GM12878 (cell line): ENCODE measurements at regions of chr1 and their contacts with region 1.

Region 1: DNA sequence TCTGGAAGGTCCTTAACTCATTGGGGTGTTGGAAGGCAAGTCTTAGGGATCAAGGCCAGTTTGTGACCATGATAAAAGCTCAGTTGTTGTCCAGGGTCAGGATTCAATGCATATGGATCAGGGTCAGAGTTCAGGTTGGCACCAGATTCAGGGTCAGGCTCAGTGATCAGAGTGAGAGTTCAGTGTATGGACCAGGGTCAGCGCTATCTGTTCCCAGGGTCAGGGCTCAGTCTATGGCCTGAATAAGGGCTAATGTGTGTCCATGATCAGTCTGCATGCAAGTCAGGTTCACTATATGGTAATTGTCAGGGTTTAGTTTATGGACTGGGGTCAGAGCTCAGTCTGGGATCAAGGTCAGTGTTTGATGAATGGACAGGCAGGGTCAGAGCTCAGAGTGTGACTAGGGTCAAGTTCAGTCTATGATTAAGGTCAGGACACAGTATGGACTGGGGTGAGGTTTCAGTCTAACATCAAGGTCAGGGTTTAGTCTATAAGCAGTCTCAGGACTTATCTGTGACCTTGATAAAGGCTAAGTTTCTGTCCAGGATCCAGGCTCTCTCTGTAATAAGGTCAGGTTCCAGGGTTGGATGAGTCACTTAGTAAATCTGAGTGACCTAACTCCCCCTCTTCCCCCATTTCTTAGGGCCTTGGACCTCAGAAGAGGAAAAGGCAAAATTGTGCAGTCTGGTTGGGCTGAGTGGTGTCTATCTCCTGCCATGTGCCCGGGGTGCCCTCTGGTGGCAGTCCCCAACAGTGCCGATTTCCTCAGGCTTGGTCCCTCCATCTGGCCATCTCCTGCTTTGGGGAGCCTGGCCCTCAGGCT is 23.8 kb downstream of the KNCN start:
- DNase-seq: no peak
- ATAC-seq: peak; percentile 89
- H3K4me3 ChIP-seq: no peak overlapping the region
- H3K27ac ChIP-seq: no peak overlapping the region
- H3K4me1 ChIP-seq: peaks cover 3% of the 10 kb centered on the region
- H3K27me3 ChIP-seq: peaks cover 2 to 3% of the 10 kb centered on the region in 2 experiments; a peak in 2 of 4 replicates
- CTCF ChIP-seq: peak; percentile 96 to 98 (median 97)
- EP300 ChIP-seq: no peak
- POLR2A ChIP-seq: no peak
- RAD21 ChIP-seq: peak; percentile 93

Region 2: DNA sequence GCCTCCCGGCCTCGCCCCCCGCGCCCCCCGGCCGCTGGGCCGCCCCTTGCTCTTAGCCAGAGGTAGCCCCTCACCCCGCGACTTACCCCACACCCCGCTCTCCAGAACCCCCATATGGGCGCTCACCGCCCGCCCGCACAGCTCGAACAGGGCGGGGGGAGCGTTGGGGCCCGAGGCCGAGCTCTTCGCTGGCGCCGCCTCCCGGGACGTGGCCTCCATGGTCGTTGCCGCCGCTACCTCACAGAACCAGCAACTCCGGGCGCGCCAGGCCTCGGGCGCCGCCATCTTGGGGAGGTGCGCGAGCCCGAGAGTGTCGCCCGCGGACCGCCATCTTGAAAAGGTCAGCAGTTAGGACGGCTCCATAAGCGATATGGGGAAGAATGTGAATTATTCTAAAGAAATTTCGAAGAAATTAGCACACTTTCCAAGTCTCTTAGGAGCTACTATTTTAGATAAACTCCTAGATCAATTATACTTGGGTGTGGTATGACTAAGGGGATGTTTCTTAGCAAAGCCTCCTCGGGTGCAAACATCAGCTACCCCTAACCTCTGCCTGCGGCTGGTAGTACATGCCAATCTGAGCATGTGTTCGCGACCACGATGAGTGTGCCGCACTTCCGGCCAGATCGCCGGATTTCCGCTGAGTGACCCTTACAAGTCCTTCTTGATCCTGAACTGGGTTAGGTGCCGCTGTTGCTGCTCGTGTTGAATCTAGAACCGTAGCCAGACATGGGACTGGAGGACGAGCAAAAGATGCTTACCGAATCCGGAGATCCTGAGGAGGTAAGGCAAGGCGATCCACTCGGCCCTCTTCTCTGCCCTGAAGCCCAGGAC is 224.4 kb before region 1 on chr1 and contains the starts of genes LRRC41 and UQCRH:
- CTCF ChIA-PET with region 1: no interaction called
- POLR2A ChIA-PET with region 1: no interaction called
- RAD21 ChIA-PET with region 1: no interaction called
- SMC1A ChIA-PET with region 1: no interaction called
- in situ Hi-C with region 1: no loop called
- intact Hi-C with region 1: no loop called
- DNase-seq: peak; percentile 93
- ATAC-seq: peak; percentile 83
- H3K4me3 ChIP-seq: peak within 1 kb of the TSS; percentile 98
- H3K27ac ChIP-seq: peak within 1 kb of the TSS; percentile 91
- H3K4me1 ChIP-seq: peaks cover 15% of the 10 kb centered on the region
- H3K27me3 ChIP-seq: no peaks in the 10 kb centered on the region
- CTCF ChIP-seq: 0 out of 6 replicates have a peak, but pooled peaks of 1 of the 3 experiments have one; percentile 1
- EP300 ChIP-seq: no peak
- POLR2A ChIP-seq: peak; percentile 93
- RAD21 ChIP-seq: no peak
- polyA plus RNA-seq, gene LRRC41: 12.0 to 12.6 TPM
- polyA plus RNA-seq, gene UQCRH: 1,451 to 1,539 TPM

Region 3: DNA sequence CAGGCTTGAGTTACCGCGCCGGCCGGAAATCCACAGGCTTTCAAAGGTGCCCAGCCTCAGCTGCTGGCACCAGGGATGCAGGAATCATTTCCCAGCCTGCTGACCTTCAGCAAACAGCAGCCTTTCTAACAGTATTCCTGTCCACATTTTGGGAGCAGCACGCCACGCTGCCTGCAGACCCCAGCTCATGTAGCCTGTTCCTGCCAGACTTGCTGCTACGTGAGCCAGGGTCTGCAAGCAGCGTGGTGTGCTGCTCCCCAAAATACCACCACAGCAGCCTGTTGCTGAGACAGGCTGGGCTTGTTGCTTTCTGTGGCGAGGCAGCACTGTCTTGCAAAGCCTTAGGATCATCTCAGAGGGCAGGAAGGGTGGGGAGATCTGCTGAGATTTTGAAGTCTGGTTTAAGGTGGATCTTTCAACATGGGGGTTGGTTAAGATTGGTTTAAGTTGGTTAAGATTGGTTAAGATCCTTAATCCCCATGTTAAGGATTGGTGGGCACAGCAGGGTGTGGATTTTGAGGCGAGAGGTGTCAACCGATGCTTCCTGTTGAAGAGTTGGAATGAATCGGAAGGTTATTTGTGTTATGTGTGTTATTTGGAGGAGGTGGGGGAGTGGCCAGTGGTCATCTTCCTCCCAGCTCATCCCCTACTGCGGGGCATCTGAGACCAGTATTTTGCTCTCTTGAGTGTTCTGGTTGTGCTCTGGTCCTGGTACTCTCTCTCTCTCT is 120.6 kb before region 1 on chr1:
- CTCF ChIA-PET with region 1: interaction called, 3 read pairs
- POLR2A ChIA-PET with region 1: no interaction called
- RAD21 ChIA-PET with region 1: no interaction called
- SMC1A ChIA-PET with region 1: no interaction called
- in situ Hi-C with region 1: no loop called
- intact Hi-C with region 1: loop called (anchors 1 kb)
- DNase-seq: no peak
- ATAC-seq: no peak
- H3K4me3 ChIP-seq: no peak overlapping the region
- H3K27ac ChIP-seq: no peak overlapping the region
- H3K4me1 ChIP-seq: no peaks in the 10 kb centered on the region
- H3K27me3 ChIP-seq: no peaks in the 10 kb centered on the region
- CTCF ChIP-seq: no peak
- EP300 ChIP-seq: no peak
- POLR2A ChIP-seq: no peak
- RAD21 ChIP-seq: no peak

Region 4: GRCh38 chr1:46442317-46443161 is 85.1 kb before region 1 on chr1:
- CTCF ChIA-PET with region 1: interaction called, 84 read pairs
- POLR2A ChIA-PET with region 1: interaction called, 4 read pairs
- RAD21 ChIA-PET with region 1: interaction called, 19 read pairs
- SMC1A ChIA-PET with region 1: interaction called, 18 read pairs
- in situ Hi-C with region 1: loop called (anchors 5 kb)
- intact Hi-C with region 1: loop called (anchors 1 kb)
- DNase-seq: no peak
- ATAC-seq: peak; percentile 89
- H3K4me3 ChIP-seq: no peak overlapping the region; the same call in 1 of the 2 replicates
- H3K27ac ChIP-seq: no peak overlapping the region
- H3K4me1 ChIP-seq: peaks cover 4% of the 10 kb centered on the region; the same call in 1 of the 2 replicates
- H3K27me3 ChIP-seq: peaks cover 4 to 11% of the 10 kb centered on the region in 2 experiments
- CTCF ChIP-seq: peak; percentile 75 to 89 (median 88)
- EP300 ChIP-seq: no peak
- POLR2A ChIP-seq: no peak
- RAD21 ChIP-seq: 0 out of 2 replicates have a peak, but pooled peaks have one; percentile 15

Region 5: GRCh38 chr1:46466477-46467182 is 61.1 kb before region 1 on chr1:
- CTCF ChIA-PET with region 1: no interaction called
- POLR2A ChIA-PET with region 1: no interaction called
- RAD21 ChIA-PET with region 1: no interaction called
- SMC1A ChIA-PET with region 1: no interaction called
- in situ Hi-C with region 1: no loop called
- intact Hi-C with region 1: no loop called
- DNase-seq: no peak
- ATAC-seq: peak; percentile 62
- H3K4me3 ChIP-seq: peak overlapping the region; percentile 53; the same call in 1 of the 2 replicates
- H3K27ac ChIP-seq: no peak overlapping the region
- H3K4me1 ChIP-seq: no peaks in the 10 kb centered on the region; the same call in 1 of the 2 replicates
- H3K27me3 ChIP-seq: peaks cover 11 to 20% of the 10 kb centered on the region in 2 experiments; a peak in 3 of 4 replicates
- CTCF ChIP-seq: no peak
- EP300 ChIP-seq: no peak
- POLR2A ChIP-seq: no peak
- RAD21 ChIP-seq: no peak

Region 6: DNA sequence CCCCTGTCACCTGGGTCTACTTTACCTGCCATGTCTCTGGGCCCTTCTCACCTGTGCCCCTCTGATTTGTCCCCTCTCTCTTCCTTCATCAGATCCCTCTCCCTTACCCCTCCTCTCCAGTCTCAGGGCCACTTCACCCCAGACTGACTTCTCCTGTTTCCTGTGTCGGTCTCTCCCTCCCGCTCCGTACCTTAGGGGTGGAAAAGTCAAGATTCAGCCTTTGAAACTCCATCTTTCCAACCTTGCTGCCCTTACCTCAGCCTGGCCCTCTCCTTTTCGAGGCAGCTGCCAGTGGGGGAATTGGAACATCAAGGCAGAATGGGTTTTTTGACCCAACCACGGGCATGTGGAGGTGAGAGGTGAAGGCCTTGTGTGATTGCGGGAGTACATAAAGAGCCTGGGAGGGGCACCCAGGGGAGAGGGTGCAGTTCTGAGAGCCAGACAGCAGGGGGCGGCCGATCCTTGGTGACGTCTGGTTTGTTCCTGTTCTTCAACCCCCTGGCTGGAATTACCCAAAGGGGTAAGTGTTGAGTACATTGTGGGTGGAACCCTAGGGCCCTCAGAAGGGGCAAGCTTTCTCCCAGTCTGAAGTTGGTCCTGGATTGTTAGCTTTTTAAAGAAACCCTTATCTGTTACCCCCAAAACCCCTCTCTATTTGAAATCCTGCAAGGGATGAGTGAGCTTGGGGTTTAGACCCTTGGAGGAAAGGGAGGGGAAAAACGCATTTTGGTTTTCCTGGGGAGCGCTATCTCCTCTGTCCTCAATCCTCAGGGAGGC is 50.3 kb before region 1 on chr1:
- CTCF ChIA-PET with region 1: interaction called, 93 read pairs
- POLR2A ChIA-PET with region 1: no interaction called
- RAD21 ChIA-PET with region 1: interaction called, 29 read pairs
- SMC1A ChIA-PET with region 1: interaction called, 8 read pairs
- in situ Hi-C with region 1: loop called (anchors 5 kb)
- intact Hi-C with region 1: loop called (anchors 1 kb)
- DNase-seq: peak; percentile 17
- ATAC-seq: peak; percentile 95
- H3K4me3 ChIP-seq: no peak overlapping the region
- H3K27ac ChIP-seq: no peak overlapping the region
- H3K4me1 ChIP-seq: no peaks in the 10 kb centered on the region
- H3K27me3 ChIP-seq: peaks cover 0 to 5% of the 10 kb centered on the region in 2 experiments; a peak in 1 of 4 replicates
- CTCF ChIP-seq: peak; percentile 92 to 98 (median 93); a peak in 5 of 6 replicates
- EP300 ChIP-seq: no peak
- POLR2A ChIP-seq: no peak
- RAD21 ChIP-seq: peak; percentile 78

Region 7: GRCh38 chr1:46487818-46488218 is 39.9 kb before region 1 on chr1:
- CTCF ChIA-PET with region 1: interaction called, 26 read pairs
- POLR2A ChIA-PET with region 1: no interaction called
- RAD21 ChIA-PET with region 1: interaction called, 8 read pairs
- SMC1A ChIA-PET with region 1: interaction called, 18 read pairs
- in situ Hi-C with region 1: no loop called
- intact Hi-C with region 1: no loop called
- DNase-seq: no peak
- ATAC-seq: peak; percentile 65
- H3K4me3 ChIP-seq: no peak overlapping the region
- H3K27ac ChIP-seq: no peak overlapping the region
- H3K4me1 ChIP-seq: no peaks in the 10 kb centered on the region
- H3K27me3 ChIP-seq: peaks cover 32 to 35% of the 10 kb centered on the region in 2 experiments
- CTCF ChIP-seq: peak in 1 of 3 experiments; percentile 15; a peak in 1 of 6 replicates
- EP300 ChIP-seq: no peak
- POLR2A ChIP-seq: no peak
- RAD21 ChIP-seq: no peak

Region 8: DNA sequence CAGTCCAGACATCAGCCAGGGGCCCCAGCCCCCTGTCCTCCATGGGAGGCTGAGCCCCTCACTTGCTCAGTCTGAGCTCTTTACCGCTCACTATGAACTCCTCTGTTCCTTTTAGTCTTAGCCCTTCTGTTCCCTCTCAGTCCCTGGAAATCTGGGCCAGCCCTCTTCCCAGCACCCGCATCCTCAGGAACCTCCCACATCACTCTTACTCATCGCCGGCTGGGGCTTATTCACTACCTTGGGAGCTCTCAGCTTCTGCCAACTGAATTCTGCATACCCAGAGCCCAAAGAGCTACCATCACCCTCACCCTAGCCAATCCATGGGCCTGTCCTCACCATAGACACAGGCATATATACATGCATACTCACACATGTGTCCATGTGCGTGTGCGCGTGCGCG is 12.3 kb after region 1 on chr1:
- CTCF ChIA-PET with region 1: interaction called, 12 read pairs
- POLR2A ChIA-PET with region 1: no interaction called
- RAD21 ChIA-PET with region 1: no interaction called
- SMC1A ChIA-PET with region 1: interaction called, 6 read pairs
- in situ Hi-C with region 1: no loop called
- intact Hi-C with region 1: no loop called
- DNase-seq: no peak
- ATAC-seq: no peak
- H3K4me3 ChIP-seq: no peak overlapping the region
- H3K27ac ChIP-seq: no peak overlapping the region
- H3K4me1 ChIP-seq: no peaks in the 10 kb centered on the region
- H3K27me3 ChIP-seq: peaks cover 11 to 12% of the 10 kb centered on the region in 2 experiments
- CTCF ChIP-seq: no peak
- EP300 ChIP-seq: no peak
- POLR2A ChIP-seq: no peak
- RAD21 ChIP-seq: no peak